MCF 10A (cell line): ENCODE measurements at regions of chr13 and their contacts with region 1.

Region 1: DNA sequence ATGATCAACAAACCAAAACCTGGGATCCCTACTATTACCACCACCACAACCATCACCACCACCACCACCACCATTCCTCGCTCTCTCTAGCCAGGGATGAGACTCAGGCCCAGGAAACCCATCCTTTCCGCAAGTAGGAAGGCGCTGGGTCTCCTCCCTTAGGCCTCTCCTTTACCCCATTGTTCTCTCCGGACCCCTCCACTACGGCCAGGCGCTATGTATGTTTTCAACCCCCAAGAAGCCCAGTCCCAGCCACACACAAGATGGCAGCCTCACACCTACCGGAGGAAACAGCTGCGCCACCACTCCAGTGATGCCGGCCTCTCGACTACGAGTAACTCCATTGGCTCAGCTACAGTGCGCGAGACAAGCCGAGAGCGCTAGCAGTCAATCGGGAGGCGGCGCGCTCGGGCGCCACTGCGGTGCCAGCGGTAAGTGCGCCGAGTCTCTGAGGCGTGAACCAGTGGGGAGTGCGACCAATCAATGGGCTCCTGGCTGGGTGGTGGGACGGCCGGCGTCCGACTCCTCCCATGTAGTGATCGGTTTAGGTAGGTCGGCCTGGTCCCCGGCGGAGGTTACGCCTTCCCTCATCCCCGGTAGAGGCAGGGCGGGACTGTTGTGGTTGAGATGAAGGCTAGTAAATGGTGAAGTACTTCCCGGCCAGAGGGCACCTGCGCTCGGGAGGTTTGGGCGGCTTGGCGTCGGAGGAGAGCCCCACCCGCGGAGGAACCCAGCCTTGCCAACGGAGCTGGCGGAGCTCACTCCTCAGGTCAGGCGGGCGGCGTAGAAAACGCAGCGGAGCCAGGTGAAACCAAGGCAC is at the starts of genes CAB39L and SETDB2:
- DNase-seq: peak; percentile 99
- H3K4me3 Mint-ChIP-seq: peak within 1 kb of the TSS; percentile 92
- H3K27ac Mint-ChIP-seq: peak within 1 kb of the TSS; percentile 99
- H3K4me1 Mint-ChIP-seq: peaks cover 7% of the 10 kb centered on the region
- H3K27me3 Mint-ChIP-seq: no peaks in the 10 kb centered on the region
- CTCF ChIP-seq: peak; percentile 9
- total RNA-seq, gene CAB39L: 6.2 and 11.1 TPM in 2 replicates
- total RNA-seq, gene SETDB2: 6.1 and 7.3 TPM in 2 replicates

Region 2: GRCh38 chr13:49374585-49375290 is 69.2 kb before region 1 on chr13:
- CTCF ChIA-PET with region 1: no interaction called
- POLR2A ChIA-PET with region 1: interaction called, 24 read pairs
- intact Hi-C with region 1: no loop called
- DNase-seq: peak; percentile 75
- H3K4me3 Mint-ChIP-seq: no peak overlapping the region
- H3K27ac Mint-ChIP-seq: no peak overlapping the region
- H3K4me1 Mint-ChIP-seq: peaks cover 11% of the 10 kb centered on the region
- H3K27me3 Mint-ChIP-seq: no peaks in the 10 kb centered on the region
- CTCF ChIP-seq: no peak

Region 3: GRCh38 chr13:49400755-49401659 is 42.9 kb before region 1 on chr13:
- CTCF ChIA-PET with region 1: no interaction called
- POLR2A ChIA-PET with region 1: no interaction called
- intact Hi-C with region 1: no loop called
- DNase-seq: no peak
- H3K4me3 Mint-ChIP-seq: no peak overlapping the region
- H3K27ac Mint-ChIP-seq: no peak overlapping the region
- H3K4me1 Mint-ChIP-seq: no peaks in the 10 kb centered on the region
- H3K27me3 Mint-ChIP-seq: no peaks in the 10 kb centered on the region
- CTCF ChIP-seq: no peak

Region 4: DNA sequence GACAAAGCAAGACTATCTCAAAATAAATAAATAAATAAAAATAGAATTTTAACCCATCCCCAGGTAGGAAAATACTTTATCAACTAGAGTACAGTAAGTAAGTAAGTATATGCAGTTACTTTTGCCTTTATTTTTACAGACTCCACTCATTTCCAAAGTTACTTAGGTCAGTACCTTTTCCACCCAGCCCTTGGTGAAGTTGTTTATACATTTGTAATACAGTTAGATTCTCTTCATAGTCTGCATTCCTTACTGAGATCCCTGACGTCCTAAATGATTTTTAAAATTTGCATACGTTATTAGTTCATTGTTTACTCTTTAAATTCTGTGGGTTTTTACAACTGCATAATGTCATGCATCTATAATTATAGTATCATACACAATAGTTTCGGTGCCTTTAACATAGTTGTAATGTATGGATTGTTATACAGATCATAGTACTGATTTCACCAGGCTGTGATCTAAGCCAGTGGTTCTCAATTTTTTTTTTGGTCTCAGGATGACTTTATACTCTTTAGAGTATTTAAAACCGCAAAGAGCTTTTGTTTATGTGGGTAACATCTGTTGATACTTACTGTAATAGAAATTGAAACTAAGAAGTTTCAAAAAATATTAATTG is 10.6 kb after region 1 on chr13:
- CTCF ChIA-PET with region 1: interaction called, 5 read pairs
- POLR2A ChIA-PET with region 1: interaction called, 27 read pairs
- intact Hi-C with region 1: no loop called
- DNase-seq: no peak
- H3K4me3 Mint-ChIP-seq: no peak overlapping the region
- H3K27ac Mint-ChIP-seq: no peak overlapping the region
- H3K4me1 Mint-ChIP-seq: peaks cover 6% of the 10 kb centered on the region
- H3K27me3 Mint-ChIP-seq: no peaks in the 10 kb centered on the region
- CTCF ChIP-seq: no peak

Region 5: DNA sequence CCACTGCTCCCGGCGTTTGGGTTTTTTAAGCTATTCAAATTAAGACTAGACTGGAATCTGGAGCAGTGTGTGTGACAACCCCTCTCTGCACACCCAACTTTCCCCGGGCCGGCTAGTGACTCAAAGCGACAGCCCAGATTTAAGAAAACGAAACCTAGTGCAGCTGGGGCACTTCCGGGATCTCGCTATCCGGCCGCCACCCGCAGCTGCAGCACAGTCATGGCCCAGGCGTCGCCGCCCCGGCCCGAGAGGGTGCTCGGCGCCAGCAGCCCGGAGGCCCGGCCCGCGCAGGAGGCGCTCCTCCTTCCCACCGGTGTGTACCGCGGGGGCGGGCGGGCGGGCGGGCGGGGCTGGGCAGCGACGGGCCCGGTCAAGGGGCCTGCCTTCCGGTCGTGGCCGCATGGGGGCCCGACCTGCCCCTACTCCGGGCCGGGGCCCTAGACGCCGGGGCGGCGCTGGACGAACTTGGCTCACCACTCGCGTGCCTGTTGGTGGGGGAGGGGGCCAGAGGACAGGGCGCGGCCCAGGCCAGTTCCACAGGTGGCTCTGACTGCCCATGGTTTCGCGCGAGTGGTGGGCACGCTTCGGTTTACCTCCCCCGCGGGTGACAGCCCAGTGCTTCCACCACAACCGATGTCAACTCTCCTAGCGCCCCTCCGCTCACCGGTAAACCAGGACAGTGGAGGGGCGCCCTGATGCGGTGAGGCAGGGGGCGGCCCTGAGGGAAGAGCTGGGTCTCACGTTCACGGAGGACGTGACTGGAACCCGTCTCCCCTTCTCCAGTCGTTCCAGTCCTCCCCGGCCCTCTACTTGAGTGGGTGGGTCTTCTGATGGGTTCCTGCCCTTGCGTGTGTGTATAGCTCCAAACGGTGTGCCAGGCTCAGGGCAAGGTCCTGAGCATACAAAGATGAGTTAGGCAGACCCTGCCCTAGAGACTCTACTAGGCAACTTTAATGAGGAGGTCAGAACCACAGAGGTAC is 52.2 kb after region 1 on chr13 and contains the start of gene PHF11:
- CTCF ChIA-PET with region 1: interaction called, 3 read pairs
- POLR2A ChIA-PET with region 1: interaction called, 36 read pairs
- intact Hi-C with region 1: loop called (anchors 2 kb)
- DNase-seq: peak; percentile 76
- H3K4me3 Mint-ChIP-seq: peak within 1 kb of the TSS; percentile 86
- H3K27ac Mint-ChIP-seq: peak within 1 kb of the TSS; percentile 87
- H3K4me1 Mint-ChIP-seq: peaks cover 31% of the 10 kb centered on the region
- H3K27me3 Mint-ChIP-seq: no peaks in the 10 kb centered on the region
- CTCF ChIP-seq: no peak
- total RNA-seq, gene PHF11: 15.4 and 17.9 TPM in 2 replicates

Region 6: GRCh38 chr13:49606747-49607648 is 163.1 kb after region 1 on chr13:
- CTCF ChIA-PET with region 1: interaction called, 7 read pairs
- POLR2A ChIA-PET with region 1: interaction called, 14 read pairs
- intact Hi-C with region 1: loop called (anchors 1 kb)
- DNase-seq: peak; percentile 87
- H3K4me3 Mint-ChIP-seq: peak overlapping the region; percentile 55
- H3K27ac Mint-ChIP-seq: no peak overlapping the region
- H3K4me1 Mint-ChIP-seq: no peaks in the 10 kb centered on the region
- H3K27me3 Mint-ChIP-seq: no peaks in the 10 kb centered on the region
- CTCF ChIP-seq: peak; percentile 74

Region 7: DNA sequence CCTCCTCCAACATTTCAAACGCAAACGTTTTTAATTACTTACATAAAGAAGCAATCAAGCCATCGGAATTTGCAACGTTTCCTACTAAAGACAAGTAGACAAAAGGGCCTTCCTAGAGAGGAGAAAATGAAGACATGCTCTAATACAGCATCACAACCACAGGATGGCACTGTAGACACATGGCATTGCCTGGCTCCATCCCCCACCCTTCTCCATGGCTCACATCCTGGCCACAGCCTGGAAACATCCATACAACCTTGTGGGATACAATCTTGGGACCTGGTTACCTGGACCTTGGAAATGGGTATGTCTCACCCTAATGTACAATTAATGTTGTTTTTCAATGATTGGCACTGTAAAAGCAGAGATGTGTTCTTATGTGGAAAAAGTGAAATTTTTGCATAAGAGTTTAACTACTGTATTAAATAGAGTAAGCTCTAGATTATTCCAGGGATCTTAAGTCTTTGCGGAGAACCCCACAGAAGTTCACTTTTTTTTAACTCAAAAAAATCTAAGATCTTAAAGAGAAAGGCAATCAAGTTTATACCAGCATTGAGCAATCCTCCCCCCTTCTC is 225.9 kb after region 1 on chr13:
- CTCF ChIA-PET with region 1: no interaction called
- POLR2A ChIA-PET with region 1: no interaction called
- intact Hi-C with region 1: no loop called
- DNase-seq: peak; percentile 73
- H3K4me3 Mint-ChIP-seq: no peak overlapping the region
- H3K27ac Mint-ChIP-seq: no peak overlapping the region
- H3K4me1 Mint-ChIP-seq: peaks cover 30% of the 10 kb centered on the region
- H3K27me3 Mint-ChIP-seq: no peaks in the 10 kb centered on the region
- CTCF ChIP-seq: peak; percentile 73

Region 8: GRCh38 chr13:49936085-49936940 is 492.4 kb after region 1 on chr13 and contains the start of gene SPRYD7:
- CTCF ChIA-PET with region 1: no interaction called
- POLR2A ChIA-PET with region 1: interaction called, 7 read pairs
- intact Hi-C with region 1: loop called (anchors 5 kb)
- DNase-seq: peak; percentile 97
- H3K4me3 Mint-ChIP-seq: peak within 1 kb of the TSS; percentile 88
- H3K27ac Mint-ChIP-seq: peak within 1 kb of the TSS; percentile 72
- H3K4me1 Mint-ChIP-seq: peaks cover 7% of the 10 kb centered on the region
- H3K27me3 Mint-ChIP-seq: no peaks in the 10 kb centered on the region
- CTCF ChIP-seq: peak; percentile 88
- total RNA-seq, gene SPRYD7: 15.1 and 19.5 TPM in 2 replicates